ENCODE measurements at regions of chr13 and their contacts with region 1.

Region 1: DNA sequence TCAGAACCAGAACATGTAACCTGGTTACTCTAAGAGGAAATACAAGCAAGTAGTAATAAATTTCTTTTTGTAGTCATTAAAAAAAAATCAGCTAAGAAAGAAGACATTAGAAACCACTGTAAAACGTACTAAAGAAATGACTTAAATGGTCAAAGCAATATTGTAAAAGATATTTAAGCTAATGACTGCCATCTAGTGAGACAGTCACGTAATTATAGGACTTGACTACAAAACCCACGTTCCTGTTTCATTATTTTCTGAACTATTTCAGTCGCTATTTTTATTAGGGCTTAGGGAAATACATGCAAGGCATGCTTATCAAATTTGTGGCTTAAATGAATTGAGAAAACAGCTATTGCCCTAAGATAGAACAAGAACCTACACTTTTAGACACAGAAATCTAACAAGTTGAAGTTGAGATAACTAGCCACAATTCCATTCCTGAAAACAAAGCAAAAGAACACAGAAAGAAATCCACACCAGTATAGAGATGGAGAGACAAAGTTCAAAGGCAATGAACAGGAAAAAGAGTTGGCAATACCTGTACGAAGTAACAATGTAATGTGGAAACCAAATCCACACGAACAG is 17.9 kb downstream of the ALG5 start:
- DNase-seq: no peak
- H3K4me3 Mint-ChIP-seq: no peak overlapping the region
- H3K27ac Mint-ChIP-seq: no peak overlapping the region
- H3K4me1 Mint-ChIP-seq: no peaks in the 10 kb centered on the region
- H3K27me3 Mint-ChIP-seq: no peaks in the 10 kb centered on the region

Region 2: DNA sequence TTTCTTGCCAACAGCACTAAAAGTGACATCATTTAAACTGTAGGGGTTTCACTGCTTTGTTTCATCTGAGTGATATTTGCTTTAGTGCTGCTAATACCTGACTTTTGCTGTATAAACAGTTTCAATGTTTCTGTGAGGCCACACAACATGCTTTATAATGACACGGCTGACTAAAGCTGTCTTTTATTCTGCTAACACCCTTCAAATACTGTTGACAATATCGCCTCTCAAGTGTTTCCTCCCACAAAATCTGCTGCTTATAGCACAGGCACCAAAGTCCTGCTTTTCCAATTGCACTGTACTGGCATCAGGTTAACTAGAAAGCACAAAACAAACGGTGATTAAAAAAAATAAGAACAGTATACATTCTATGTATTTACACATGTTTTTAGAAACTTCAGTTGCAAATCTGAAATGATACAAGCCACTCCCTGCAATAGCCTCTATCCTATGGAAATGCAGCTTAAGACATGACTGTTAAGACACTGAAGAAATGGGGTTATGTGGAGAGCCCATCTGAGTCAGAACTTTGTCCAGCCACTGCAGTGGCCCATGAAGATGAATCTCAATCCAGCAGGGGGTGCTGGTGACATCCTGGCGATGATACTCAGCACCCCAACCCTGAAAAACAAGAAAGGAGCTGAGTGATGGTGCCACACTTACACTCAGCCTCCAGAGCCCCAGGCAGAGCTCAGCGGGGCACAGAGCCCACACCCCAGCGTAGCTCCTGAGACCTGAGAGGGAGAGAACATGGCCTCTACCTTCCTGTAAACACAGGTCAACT is 132.9 kb before region 1 on chr13:
- intact Hi-C with region 1: loop called (anchors 2 kb)
- DNase-seq: no peak
- H3K4me3 Mint-ChIP-seq: no peak overlapping the region
- H3K27ac Mint-ChIP-seq: no peak overlapping the region
- H3K4me1 Mint-ChIP-seq: no peaks in the 10 kb centered on the region
- H3K27me3 Mint-ChIP-seq: no peaks in the 10 kb centered on the region

Region 3: DNA sequence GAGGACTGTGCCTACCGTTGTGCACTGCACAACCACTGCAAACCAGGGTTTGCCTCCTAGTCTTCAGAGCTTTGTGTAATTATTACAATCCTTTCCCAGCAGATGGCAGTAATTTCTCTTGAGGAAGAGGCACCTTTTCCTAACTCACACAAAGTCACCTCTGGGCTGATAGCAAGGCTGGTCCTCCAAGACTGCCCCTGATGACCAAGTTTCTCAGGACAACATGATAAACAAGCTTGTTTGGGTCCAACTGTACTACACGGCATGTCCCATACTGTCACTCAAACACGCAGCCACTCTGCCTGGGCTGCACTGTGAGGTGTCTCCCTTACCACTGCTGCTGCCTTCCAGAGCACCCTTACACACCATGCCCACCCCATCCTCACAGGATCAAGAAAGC is 123.0 kb before region 1 on chr13:
- intact Hi-C with region 1: loop called (anchors 1 kb)
- DNase-seq: no peak
- H3K4me3 Mint-ChIP-seq: no peak overlapping the region
- H3K27ac Mint-ChIP-seq: no peak overlapping the region
- H3K4me1 Mint-ChIP-seq: peaks cover 18% of the 10 kb centered on the region
- H3K27me3 Mint-ChIP-seq: peaks cover 2% of the 10 kb centered on the region

Region 4: DNA sequence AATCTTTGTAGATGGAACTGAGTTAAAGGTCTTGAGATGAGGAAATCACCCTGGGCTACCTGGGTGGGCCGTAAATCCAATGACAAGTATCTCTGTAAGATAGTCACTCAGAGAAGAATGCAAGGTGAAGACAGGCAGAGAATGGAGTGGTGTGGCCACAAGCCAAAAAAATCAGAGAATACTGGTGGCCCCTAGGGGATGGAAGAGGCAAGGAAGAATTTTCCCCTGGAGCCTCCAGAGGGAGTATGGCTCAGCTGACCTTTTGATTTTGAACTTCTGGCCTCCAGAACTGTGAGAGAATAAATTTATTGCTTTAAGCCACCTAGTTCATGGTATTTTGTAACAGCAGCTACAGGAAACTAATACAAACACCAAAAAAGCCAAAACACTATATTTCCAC is 156.9 kb after region 1 on chr13:
- intact Hi-C with region 1: no loop called
- DNase-seq: no peak
- H3K4me3 Mint-ChIP-seq: no peak overlapping the region
- H3K27ac Mint-ChIP-seq: no peak overlapping the region
- H3K4me1 Mint-ChIP-seq: no peaks in the 10 kb centered on the region
- H3K27me3 Mint-ChIP-seq: no peaks in the 10 kb centered on the region

Measured in activated T-helper 1 cell treated with anti-CD3 and anti-CD28 coated beads, Interleukin-12 subunit alpha, Interleukin-12 subunit beta, Interleukin-2, Interleukin-4 antibody, amounts not matched to agents 30 ng/mL and 10 ng/mL and 1 ng/mL, durations not matched to agents 14 hours and 24 hours and 36 hours (primary cell).